PC-3 (cell line): ENCODE measurements at regions of chr2 and their contacts with region 1.

Region 1: DNA sequence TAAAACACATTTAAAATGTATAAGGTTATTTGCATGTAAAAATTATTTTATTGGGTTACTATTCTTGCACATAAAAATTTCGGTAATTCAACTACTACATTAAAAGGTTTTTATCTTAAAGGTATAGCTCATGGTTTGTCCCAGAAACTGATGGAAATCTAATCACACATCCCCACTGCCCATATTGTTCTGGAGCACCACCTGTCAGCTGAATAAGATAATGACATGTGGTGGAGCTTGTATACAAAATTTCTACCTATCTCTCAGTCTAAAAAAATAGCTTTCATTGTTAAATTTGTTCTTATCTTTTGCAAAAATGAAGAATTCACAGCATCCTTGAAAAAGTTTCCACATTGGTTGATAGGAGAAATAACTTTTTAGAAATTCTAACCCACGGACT is 18.3 kb downstream of the ERBB4 start:
- DNase-seq: peak; percentile 25
- ATAC-seq: peak; percentile 60
- H3K4me3 ChIP-seq: no peak overlapping the region
- H3K27ac ChIP-seq: no peak overlapping the region
- H3K4me1 ChIP-seq: no peaks in the 10 kb centered on the region
- H3K27me3 ChIP-seq: 0 out of 2 replicates have a peak, but pooled peaks cover 3% of the 10 kb centered on the region
- CTCF ChIP-seq: peak; percentile 57

Region 2: GRCh38 chr2:212005085-212005671 is 515.2 kb before region 1 on chr2:
- CTCF ChIA-PET with region 1: no interaction called
- POLR2A ChIA-PET with region 1: no interaction called
- intact Hi-C with region 1: loop called (anchors 10 kb)
- DNase-seq: peak; percentile 68
- ATAC-seq: peak; percentile 87
- H3K4me3 ChIP-seq: no peak overlapping the region
- H3K27ac ChIP-seq: no peak overlapping the region
- H3K4me1 ChIP-seq: no peaks in the 10 kb centered on the region
- H3K27me3 ChIP-seq: no peaks in the 10 kb centered on the region
- CTCF ChIP-seq: peak; percentile 82

Region 3: DNA sequence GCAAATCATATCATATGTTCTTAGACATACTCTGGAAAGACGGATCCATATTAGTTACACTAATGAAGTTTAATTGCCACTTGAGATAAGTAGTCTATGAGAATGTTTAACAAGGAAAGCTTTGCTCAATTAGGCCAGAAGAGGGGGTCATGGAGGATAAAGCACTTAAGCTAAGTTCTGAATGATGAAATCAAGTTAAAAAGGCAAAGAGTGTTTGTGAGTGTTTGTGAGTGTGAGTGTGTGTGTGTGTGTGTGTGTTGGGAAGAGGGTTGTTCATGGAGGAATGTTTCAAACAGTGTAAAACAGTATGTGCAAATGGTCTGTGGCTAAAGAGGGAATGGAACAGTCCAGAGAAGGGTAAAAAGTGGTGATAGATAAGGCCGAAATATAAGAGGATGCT is 342.6 kb before region 1 on chr2:
- CTCF ChIA-PET with region 1: interaction called, 5 read pairs
- POLR2A ChIA-PET with region 1: no interaction called
- intact Hi-C with region 1: loop called (anchors 10 kb)
- DNase-seq: peak; percentile 9
- ATAC-seq: no peak
- H3K4me3 ChIP-seq: no peak overlapping the region
- H3K27ac ChIP-seq: no peak overlapping the region
- H3K4me1 ChIP-seq: peaks cover 3% of the 10 kb centered on the region; the same call in 1 of the 2 replicates
- H3K27me3 ChIP-seq: no peaks in the 10 kb centered on the region
- CTCF ChIP-seq: peak; percentile 45

Region 4: GRCh38 chr2:212402315-212402714 is 118.0 kb before region 1 on chr2:
- CTCF ChIA-PET with region 1: no interaction called
- POLR2A ChIA-PET with region 1: no interaction called
- intact Hi-C with region 1: loop called (anchors 1 kb)
- DNase-seq: peak; percentile 26
- ATAC-seq: peak; percentile 50; the same call in 1 of the 2 replicates
- H3K4me3 ChIP-seq: no peak overlapping the region
- H3K27ac ChIP-seq: no peak overlapping the region
- H3K4me1 ChIP-seq: no peaks in the 10 kb centered on the region
- H3K27me3 ChIP-seq: no peaks in the 10 kb centered on the region
- CTCF ChIP-seq: peak; percentile 16; the same call in 1 of the 2 replicates

Region 5: GRCh38 chr2:212484563-212485080 is 35.7 kb before region 1 on chr2:
- CTCF ChIA-PET with region 1: no interaction called
- POLR2A ChIA-PET with region 1: no interaction called
- intact Hi-C with region 1: no loop called
- DNase-seq: no peak
- ATAC-seq: no peak
- H3K4me3 ChIP-seq: no peak overlapping the region
- H3K27ac ChIP-seq: no peak overlapping the region
- H3K4me1 ChIP-seq: no peaks in the 10 kb centered on the region
- H3K27me3 ChIP-seq: no peaks in the 10 kb centered on the region
- CTCF ChIP-seq: no peak